ENCODE measurements at regions of chr5 and their contacts with region 1.

Region 1: DNA sequence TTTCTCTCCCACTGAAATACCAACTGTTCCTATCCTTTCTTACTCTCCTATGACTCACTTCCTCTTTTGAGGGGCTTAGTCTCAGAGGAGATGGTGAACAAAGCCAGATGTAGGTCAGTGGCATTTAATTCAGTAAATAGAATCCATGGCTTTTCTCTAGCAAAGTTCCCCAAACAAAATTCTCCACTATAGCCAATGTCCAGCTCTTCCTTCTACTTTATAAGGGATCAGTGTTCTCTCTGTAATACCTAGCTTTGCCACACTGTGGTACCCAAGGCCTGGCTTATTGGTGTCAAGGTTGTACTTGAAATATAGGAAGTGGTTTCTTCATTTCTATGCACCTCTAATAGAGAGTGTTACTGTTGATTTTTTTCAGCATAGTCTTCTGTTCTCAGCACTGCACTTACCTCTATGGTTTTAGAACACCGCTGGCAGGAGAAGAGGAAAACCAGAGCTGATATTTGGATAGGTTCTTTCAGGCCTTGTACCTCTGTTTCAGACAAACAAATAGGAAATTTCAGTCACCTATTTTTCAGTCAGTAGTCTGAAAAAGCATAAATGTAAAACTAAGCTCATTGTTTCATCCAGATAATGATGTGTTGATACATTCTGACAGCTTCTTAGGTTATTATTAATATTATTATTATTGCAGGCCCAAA is 40.6 kb upstream of the ITGA2 start:
- DNase-seq: peak; percentile 14 to 76 (median 48)
- ATAC-seq: peak; percentile 94 to 100 (median 98)
- H3K4me3 ChIP-seq: no peak overlapping the region
- H3K4me3 Mint-ChIP-seq: no peak overlapping the region
- H3K27ac ChIP-seq: no peak overlapping the region
- H3K27ac Mint-ChIP-seq: peak overlapping the region in 1 of 2 donors; percentile 46
- H3K4me1 ChIP-seq: no peaks in the 10 kb centered on the region
- H3K4me1 Mint-ChIP-seq: peaks cover 20 to 22% (median 21%) of the 10 kb centered on the region in 3 donors
- H3K27me3 ChIP-seq: peaks cover 0 to 7% of the 10 kb centered on the region in 2 experiments
- H3K27me3 Mint-ChIP-seq: no peaks in the 10 kb centered on the region

Region 2: DNA sequence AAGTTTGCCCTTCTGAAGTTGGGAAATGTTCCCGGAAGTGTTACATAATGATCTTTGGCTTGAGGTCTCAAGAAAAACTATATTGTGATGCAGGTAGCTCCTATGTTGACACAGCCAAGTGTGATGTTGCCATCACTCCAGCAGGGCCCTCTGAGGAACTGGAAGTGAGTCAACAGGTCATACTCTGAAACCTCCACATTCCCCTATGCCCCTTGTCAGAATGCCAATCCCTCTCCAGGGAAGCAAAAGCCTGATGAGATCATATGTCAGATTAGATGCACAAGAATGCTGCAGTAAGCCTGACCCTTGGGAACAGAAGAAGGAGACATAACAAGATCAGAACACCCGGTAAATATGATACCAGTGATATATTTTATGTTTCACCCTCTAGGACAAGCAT is 26.2 kb before region 1 on chr5:
- CTCF ChIA-PET with region 1: no interaction called
- POLR2A ChIA-PET with region 1: no interaction called
- DNase-seq: no peak
- ATAC-seq: no peak
- H3K4me3 ChIP-seq: no peak overlapping the region
- H3K4me3 Mint-ChIP-seq: no peak overlapping the region
- H3K27ac ChIP-seq: no peak overlapping the region
- H3K27ac Mint-ChIP-seq: no peak overlapping the region
- H3K4me1 ChIP-seq: no peaks in the 10 kb centered on the region
- H3K4me1 Mint-ChIP-seq: no peaks in the 10 kb centered on the region
- H3K27me3 ChIP-seq: no peaks in the 10 kb centered on the region
- H3K27me3 Mint-ChIP-seq: peaks cover 7 to 9% of the 10 kb centered on the region in 2 donors

Region 3: DNA sequence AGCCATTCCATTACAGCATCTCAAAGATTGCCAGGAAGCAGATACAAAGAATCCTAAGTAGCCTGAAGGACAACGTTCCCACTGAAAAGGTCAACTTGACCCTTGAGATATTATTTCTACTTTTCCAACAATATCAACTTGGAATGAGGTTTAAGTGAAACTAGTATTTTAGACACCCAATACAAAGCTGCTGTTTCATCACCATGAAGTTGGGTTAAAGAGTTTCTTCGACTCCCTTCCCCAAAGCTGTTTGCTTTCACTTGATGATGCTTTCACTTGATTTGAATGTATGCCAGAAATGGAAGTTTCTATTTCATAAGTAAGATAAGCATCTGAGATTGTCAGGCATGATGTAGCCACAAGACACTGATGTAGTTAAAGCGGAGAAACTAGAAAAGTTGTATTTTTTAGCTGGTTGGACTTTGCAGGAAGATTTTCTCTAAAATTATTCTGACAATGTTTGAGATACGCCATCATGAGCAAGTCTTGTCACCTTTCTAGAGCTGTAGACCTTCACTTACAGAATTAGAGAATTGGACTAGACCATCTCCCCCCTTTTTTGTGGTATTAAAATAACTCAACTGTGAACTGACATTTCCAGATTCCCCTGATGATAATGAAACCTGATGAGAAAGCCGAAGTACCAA is 140.9 kb after region 1 on chr5:
- CTCF ChIA-PET with region 1: interaction called, 100 to 125 read pairs
- POLR2A ChIA-PET with region 1: interaction called in 1 of 2 experiments, 3 read pairs
- DNase-seq: peak in 1 of 35 experiments; percentile 34
- ATAC-seq: peak; percentile 35 to 87 (median 38)
- H3K4me3 ChIP-seq: no peak overlapping the region
- H3K4me3 Mint-ChIP-seq: peak overlapping the region in 2 of 3 donors; percentile 32 to 62
- H3K27ac ChIP-seq: no peak overlapping the region
- H3K27ac Mint-ChIP-seq: peak overlapping the region in 1 of 2 donors; percentile 64
- H3K4me1 ChIP-seq: peaks cover 0 to 12% of the 10 kb centered on the region in 2 experiments
- H3K4me1 Mint-ChIP-seq: peaks cover 18 to 22% (median 21%) of the 10 kb centered on the region in 3 donors
- H3K27me3 ChIP-seq: no peaks in the 10 kb centered on the region
- H3K27me3 Mint-ChIP-seq: no peaks in the 10 kb centered on the region

Region 4: DNA sequence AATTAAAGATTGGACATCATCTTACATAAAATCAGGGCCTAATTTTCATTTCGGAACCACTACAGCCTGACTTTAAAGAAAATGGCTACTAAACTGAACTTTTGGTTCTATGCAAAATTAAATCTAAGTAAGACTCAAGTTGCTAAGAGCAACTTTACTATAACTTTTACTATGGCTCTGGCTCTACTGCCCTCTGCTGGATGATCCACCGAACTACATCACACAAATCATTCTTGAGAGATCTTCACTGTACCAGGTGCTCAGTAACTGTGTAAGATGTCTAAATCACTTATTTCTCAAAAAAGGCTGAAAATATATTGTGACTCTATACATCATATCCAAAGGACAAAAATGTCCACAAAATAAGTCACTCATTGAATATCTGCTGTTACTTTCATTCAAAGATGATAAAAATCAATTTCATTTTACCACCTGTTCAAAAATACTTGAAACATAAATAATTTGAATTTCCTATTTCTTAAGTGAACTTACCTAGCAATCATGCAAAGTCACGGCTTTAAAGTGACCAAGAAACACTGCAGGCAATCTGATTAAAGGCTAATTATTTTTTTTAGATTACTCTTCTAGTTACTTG is 147.5 kb after region 1 on chr5:
- CTCF ChIA-PET with region 1: interaction called, 100 to 125 read pairs
- POLR2A ChIA-PET with region 1: interaction called in 1 of 2 experiments, 5 read pairs
- DNase-seq: peak; percentile 12 to 80 (median 52)
- ATAC-seq: peak; percentile 71 to 82 (median 76)
- H3K4me3 ChIP-seq: no peak overlapping the region
- H3K4me3 Mint-ChIP-seq: no peak overlapping the region
- H3K27ac ChIP-seq: no peak overlapping the region
- H3K27ac Mint-ChIP-seq: no peak overlapping the region
- H3K4me1 ChIP-seq: no peaks in the 10 kb centered on the region
- H3K4me1 Mint-ChIP-seq: peaks cover 0 to 2% (median 0%) of the 10 kb centered on the region in 3 donors
- H3K27me3 ChIP-seq: no peaks in the 10 kb centered on the region
- H3K27me3 Mint-ChIP-seq: no peaks in the 10 kb centered on the region

Region 5: GRCh38 chr5:53109443-53110127 is 161.0 kb after region 1 on chr5 and contains the start of gene MOCS2:
- CTCF ChIA-PET with region 1: interaction called, 3 to 11 read pairs
- POLR2A ChIA-PET with region 1: no interaction called
- DNase-seq: peak; percentile 78 to 95 (median 87)
- ATAC-seq: peak; percentile 95 to 97 (median 96)
- H3K4me3 ChIP-seq: peak within 1 kb of the TSS; percentile 83 to 89
- H3K4me3 Mint-ChIP-seq: peak within 1 kb of the TSS; percentile 92 to 97 (median 96)
- H3K27ac ChIP-seq: peak within 1 kb of the TSS; percentile 66
- H3K27ac Mint-ChIP-seq: peak within 1 kb of the TSS; percentile 87 to 96
- H3K4me1 ChIP-seq: peaks cover 9 to 12% of the 10 kb centered on the region in 2 experiments
- H3K4me1 Mint-ChIP-seq: peaks cover 42 to 61% (median 60%) of the 10 kb centered on the region in 3 donors
- H3K27me3 ChIP-seq: no peaks in the 10 kb centered on the region
- H3K27me3 Mint-ChIP-seq: no peaks in the 10 kb centered on the region
- total RNA-seq, gene MOCS2: 15.2 to 26.1 (median 21.0) TPM

Region 6: DNA sequence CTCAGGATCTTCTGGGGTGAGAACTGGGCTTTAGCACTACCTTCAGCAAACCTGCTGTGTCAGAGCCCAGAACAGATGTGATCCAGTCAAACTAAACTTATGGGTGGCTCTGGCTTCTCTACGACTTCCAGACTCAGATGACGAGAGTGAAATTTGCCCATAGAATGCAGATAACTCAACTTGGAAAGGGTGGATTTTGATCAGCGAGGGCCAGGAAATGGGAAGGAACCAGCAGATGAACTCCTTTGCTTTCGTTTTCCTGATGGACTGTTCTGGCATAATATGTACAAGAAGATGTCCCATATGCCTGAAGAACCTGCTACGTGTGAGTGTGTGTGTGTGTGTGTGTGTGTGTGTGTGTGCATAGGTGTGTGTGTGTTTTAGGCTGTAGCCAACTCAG is 293.0 kb after region 1 on chr5:
- CTCF ChIA-PET with region 1: interaction called in 1 of 2 experiments, 10 read pairs
- POLR2A ChIA-PET with region 1: no interaction called
- DNase-seq: no peak
- ATAC-seq: no peak
- H3K4me3 ChIP-seq: no peak overlapping the region
- H3K4me3 Mint-ChIP-seq: no peak overlapping the region
- H3K27ac ChIP-seq: no peak overlapping the region
- H3K27ac Mint-ChIP-seq: no peak overlapping the region
- H3K4me1 ChIP-seq: no peaks in the 10 kb centered on the region
- H3K4me1 Mint-ChIP-seq: no peaks in the 10 kb centered on the region
- H3K27me3 ChIP-seq: peaks cover 0 to 2% of the 10 kb centered on the region in 2 experiments
- H3K27me3 Mint-ChIP-seq: peaks cover 8 to 14% of the 10 kb centered on the region in 2 donors

Region 7: DNA sequence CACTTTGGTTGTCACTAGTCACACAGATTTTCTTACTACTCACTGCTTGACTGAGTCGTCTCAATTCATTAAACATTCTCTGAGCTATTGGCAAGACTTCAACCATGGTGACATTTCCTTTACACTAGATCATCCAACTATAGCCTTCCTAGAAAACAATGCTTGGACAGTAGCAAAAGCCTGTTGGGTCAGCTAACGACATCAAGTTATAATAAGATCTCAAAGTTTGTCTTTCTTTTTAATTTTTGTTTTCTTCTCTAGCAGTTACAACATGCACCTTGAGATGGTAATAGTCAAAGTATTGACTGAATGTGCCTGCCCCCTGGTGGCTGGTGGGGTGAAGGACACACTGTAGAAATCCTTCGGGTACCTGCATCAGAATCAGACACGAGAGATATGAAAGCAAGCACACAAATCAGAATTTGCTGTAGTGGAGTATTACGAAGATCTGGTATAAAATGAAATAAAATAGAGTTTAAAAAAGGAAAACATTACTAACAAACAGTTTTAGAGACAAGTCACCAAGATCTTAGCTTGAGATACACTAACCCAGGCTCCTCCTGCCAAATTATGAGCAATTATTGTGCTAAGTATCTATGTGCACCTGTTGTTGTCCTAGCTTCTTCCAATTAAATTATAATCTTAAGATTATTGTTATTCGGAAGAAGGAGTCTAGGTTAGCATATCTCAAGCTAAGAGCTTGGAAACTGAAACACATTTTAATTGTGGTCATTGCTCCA is 1280.7 kb after region 1 on chr5:
- CTCF ChIA-PET with region 1: interaction called, 14 to 24 read pairs
- POLR2A ChIA-PET with region 1: no interaction called
- DNase-seq: peak; percentile 18 to 74 (median 63)
- ATAC-seq: peak; percentile 72 to 77 (median 76)
- H3K4me3 ChIP-seq: no peak overlapping the region
- H3K4me3 Mint-ChIP-seq: no peak overlapping the region
- H3K27ac ChIP-seq: no peak overlapping the region
- H3K27ac Mint-ChIP-seq: no peak overlapping the region
- H3K4me1 ChIP-seq: peaks cover 0 to 2% of the 10 kb centered on the region in 2 experiments
- H3K4me1 Mint-ChIP-seq: peaks cover 5 to 45% (median 8%) of the 10 kb centered on the region in 3 donors
- H3K27me3 ChIP-seq: no peaks in the 10 kb centered on the region
- H3K27me3 Mint-ChIP-seq: no peaks in the 10 kb centered on the region